ENCODE measurements at regions of chr1 and their contacts with region 1.

Region 1: GRCh38 chr1:234610348-234611152 is 572 bp upstream of the IRF2BP2 start:
- DNase-seq: peak; percentile 82 to 93
- H3K4me3 ChIP-seq: peak overlapping the region; percentile 39
- H3K4me1 ChIP-seq: peaks cover 36% of the 10 kb centered on the region
- H3K27me3 ChIP-seq: no peaks in the 10 kb centered on the region

Region 2: DNA sequence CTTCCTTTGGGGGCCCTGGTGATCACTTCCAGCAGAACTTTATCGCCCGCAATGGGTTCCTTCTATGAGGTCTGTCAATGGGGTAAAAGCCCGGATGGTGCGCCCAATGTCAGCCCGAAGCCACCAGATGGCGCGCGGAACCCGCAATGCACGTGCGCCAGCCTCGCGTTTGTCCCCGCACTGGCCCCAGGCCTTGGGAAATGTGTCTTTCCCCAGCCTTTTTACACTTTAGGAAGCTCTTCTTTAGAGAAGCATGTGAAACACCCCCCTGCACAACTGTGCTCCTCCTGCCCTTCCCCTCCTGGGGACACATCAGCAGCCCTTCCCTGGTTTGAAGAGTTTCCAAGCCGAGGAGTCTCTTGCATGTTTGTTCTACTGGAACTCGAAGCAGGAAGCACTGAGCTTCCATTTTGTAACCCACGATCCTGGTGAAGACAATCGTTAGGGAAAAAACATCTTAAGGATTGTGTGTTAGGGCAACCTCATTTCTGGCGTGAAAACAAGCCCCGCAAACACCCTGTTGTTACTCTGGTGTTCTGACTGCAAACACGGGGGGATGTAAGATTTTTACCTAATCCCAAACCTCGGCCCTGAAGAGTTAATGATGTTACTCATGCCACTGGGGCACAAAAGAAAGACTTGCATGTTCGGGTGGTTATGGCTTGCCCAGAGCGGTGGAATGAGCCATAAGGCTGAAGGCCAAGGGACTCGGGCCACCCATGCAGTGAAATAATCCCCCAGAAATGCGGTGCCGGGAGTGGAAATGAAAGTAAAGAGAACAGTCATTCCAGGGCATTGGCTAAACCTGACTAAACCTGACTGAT is 111.2 kb before region 1 on chr1:
- in situ Hi-C with region 1: loop called (anchors 5 kb)
- DNase-seq: peak; percentile 78 to 92
- H3K4me3 ChIP-seq: no peak overlapping the region
- H3K4me1 ChIP-seq: peaks cover 49% of the 10 kb centered on the region
- H3K27me3 ChIP-seq: no peaks in the 10 kb centered on the region

Region 3: DNA sequence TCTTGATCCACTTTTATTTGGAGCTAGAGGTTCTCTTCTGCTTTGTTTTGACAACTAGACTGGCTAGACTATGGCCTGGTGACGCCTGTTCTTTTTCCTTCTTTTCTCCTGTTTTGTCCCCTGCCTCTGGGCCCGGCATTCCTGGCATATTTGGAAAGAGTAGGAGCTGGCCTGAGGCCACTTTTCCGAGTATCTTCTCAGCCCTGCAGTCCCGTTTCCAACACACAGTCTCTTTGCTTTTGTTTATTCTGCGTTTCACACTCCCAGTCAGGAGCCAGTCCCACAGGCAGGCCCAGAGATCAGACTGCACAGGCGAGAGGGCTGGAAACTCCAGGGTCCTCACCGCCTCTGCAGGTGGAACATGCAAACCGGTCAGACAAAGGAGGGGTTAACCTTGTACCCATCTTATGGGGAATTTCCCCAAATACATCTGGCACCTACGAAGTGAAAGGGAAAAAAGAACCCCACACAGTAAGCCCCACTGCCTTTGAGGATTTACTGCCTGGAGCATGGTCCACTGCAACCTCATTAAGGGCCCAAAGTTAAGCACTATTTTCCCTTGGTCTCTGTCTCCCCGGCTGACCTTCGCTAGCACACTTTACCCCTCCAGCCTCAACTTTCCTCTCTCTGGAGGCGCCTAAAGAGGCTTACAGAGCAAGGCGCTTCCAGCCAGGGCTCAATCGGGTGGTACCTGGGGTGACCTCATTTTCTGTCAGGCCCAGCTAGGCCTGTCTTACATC is 377.0 kb after region 1 on chr1:
- in situ Hi-C with region 1: loop called (anchors 5 kb)
- DNase-seq: peak; percentile 78 to 82
- H3K4me3 ChIP-seq: no peak overlapping the region
- H3K4me1 ChIP-seq: peaks cover 20% of the 10 kb centered on the region
- H3K27me3 ChIP-seq: no peaks in the 10 kb centered on the region

Region 4: GRCh38 chr1:235067263-235068172 is 457.0 kb after region 1 on chr1:
- in situ Hi-C with region 1: no loop called
- DNase-seq: peak in 1 of 2 experiments; percentile 33
- H3K4me3 ChIP-seq: no peak overlapping the region
- H3K4me1 ChIP-seq: 0 out of 2 replicates have a peak, but pooled peaks cover 4% of the 10 kb centered on the region
- H3K27me3 ChIP-seq: no peaks in the 10 kb centered on the region